ENCODE measurements at regions of chr5 and their contacts with region 1.

Region 1: GRCh38 chr5:180831139-180832048 is 28.8 kb upstream of the MGAT1 start:
- DNase-seq: peak; percentile 76
- H3K4me3 Mint-ChIP-seq: peak overlapping the region; percentile 91
- H3K27ac Mint-ChIP-seq: peak overlapping the region; percentile 99
- H3K4me1 Mint-ChIP-seq: peaks cover 33% of the 10 kb centered on the region
- H3K27me3 Mint-ChIP-seq: no peaks in the 10 kb centered on the region

Region 2: GRCh38 chr5:180860887-180861822 is 29.8 kb after region 1 on chr5 and contains the start of gene ZFP62:
- intact Hi-C with region 1: loop called (anchors 1 kb)
- DNase-seq: peak; percentile 82
- H3K4me3 Mint-ChIP-seq: peak within 1 kb of the TSS; percentile 90
- H3K27ac Mint-ChIP-seq: peak within 1 kb of the TSS; percentile 91
- H3K4me1 Mint-ChIP-seq: peaks cover 18% of the 10 kb centered on the region
- H3K27me3 Mint-ChIP-seq: peaks cover 4% of the 10 kb centered on the region
- total RNA-seq, gene ZFP62: 28.4 and 28.5 TPM in 2 replicates

Region 3: DNA sequence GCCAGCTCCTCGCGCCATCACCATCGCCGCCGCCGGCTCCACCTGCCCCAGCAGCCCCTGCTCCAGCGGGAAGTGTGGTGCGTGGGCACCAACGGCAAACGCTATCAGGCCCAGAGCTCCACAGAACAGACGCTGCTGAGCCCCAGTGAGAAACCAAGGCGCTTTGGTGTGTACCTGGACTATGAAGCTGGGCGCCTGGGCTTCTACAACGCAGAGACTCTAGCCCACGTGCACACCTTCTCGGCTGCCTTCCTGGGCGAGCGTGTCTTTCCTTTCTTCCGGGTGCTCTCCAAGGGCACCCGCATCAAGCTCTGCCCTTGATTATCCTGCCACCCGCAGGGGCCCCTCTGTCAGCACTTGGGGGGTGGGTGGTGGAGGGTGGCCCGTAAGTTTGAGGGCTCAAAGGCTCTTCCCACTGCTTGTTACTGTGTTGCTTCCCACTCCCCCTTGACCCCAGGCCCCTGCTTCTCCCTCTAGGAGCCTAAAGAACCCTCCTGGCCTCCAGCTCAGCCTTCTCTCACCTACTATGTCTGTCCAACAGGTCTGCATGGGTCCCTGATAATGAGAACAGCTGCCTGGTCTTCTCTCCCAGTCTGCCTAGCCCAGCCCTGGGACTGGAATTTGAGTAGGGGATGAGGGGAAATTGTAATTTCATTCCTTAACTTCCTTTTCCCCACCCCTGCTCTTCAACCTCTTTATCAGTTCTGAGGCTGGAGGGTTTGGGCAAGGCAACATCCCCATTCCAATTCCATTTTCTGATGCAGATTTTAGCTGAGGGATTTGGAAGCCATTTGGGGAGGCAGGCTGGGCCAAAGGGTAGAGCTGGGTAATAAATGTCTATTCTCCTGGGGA is 403.3 kb after region 1 on chr5:
- intact Hi-C with region 1: no loop called
- DNase-seq: no peak
- H3K4me3 Mint-ChIP-seq: no peak overlapping the region
- H3K27ac Mint-ChIP-seq: peak overlapping the region; percentile 61
- H3K4me1 Mint-ChIP-seq: peaks cover 26% of the 10 kb centered on the region
- H3K27me3 Mint-ChIP-seq: no peaks in the 10 kb centered on the region

Measured in activated T-helper 1 cell treated with anti-CD3 and anti-CD28 coated beads, Interleukin-12 subunit alpha, Interleukin-12 subunit beta, Interleukin-2, Interleukin-4 antibody, amounts not matched to agents 30 ng/mL and 10 ng/mL and 1 ng/mL, durations not matched to agents 14 hours and 24 hours and 36 hours (primary cell).